ENCODE measurements at regions of chr7 and their contacts with region 1.

Region 1: GRCh38 chr7:30800785-30801252 is 29.6 kb downstream of the MINDY4 start:
- DNase-seq: peak; percentile 82
- H3K4me3 Mint-ChIP-seq: no peak overlapping the region
- H3K27ac Mint-ChIP-seq: no peak overlapping the region
- H3K4me1 Mint-ChIP-seq: peaks cover 18% of the 10 kb centered on the region
- H3K27me3 Mint-ChIP-seq: no peaks in the 10 kb centered on the region

Region 2: DNA sequence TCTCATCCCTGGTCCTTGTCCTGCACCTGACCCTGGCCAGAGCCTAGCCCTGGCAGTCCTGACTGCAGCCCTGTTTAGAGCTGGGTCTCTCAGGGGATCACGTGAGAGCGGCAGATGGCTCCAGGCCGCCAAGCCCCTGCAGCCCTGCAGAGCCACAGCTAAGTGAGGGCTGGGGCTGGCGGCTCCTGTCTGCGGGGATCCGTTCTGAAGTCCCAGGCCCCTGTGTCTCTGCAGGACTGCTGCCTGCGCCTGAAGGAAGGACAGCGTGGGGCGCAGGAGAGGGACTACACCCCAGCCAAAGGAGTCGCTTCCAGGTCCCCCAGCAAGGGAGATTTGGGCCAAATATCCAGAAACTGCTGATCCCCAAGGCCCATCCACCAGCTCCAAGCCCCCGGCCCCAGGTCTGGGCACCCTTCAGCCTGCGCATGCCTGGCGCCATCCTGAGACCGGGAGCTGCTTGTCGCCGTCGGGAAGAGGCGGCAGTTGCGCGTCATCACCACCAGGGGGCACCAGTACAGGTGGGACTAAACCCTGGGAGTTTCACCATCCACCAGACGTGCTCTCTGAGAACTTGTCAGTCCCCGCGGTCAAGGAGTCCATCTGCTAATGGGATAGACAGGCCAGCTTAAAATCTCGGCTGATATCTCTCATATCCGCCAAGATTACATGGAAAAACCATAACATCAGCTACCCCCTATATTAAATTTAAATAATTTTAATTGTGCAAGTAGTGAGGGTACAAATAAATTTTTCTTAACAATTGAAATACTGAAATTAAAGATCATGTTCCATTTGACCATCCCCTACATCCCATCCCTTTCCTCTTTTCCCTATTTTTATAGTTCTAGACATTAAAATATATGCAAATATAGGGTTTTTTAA is 137.9 kb after region 1 on chr7:
- intact Hi-C with region 1: loop called (anchors 2 kb)
- DNase-seq: peak; percentile 92
- H3K4me3 Mint-ChIP-seq: no peak overlapping the region
- H3K27ac Mint-ChIP-seq: no peak overlapping the region
- H3K4me1 Mint-ChIP-seq: no peaks in the 10 kb centered on the region
- H3K27me3 Mint-ChIP-seq: peaks cover 37% of the 10 kb centered on the region

Region 3: GRCh38 chr7:30974605-30975255 is 173.9 kb after region 1 on chr7:
- intact Hi-C with region 1: loop called (anchors 2 kb)
- DNase-seq: peak; percentile 90
- H3K4me3 Mint-ChIP-seq: no peak overlapping the region
- H3K27ac Mint-ChIP-seq: peak overlapping the region; percentile 69
- H3K4me1 Mint-ChIP-seq: peaks cover 7% of the 10 kb centered on the region
- H3K27me3 Mint-ChIP-seq: peaks cover 16% of the 10 kb centered on the region

Region 4: GRCh38 chr7:31488562-31489203 is 687.9 kb after region 1 on chr7:
- intact Hi-C with region 1: loop called (anchors 5 kb)
- DNase-seq: peak; percentile 80
- H3K4me3 Mint-ChIP-seq: no peak overlapping the region
- H3K27ac Mint-ChIP-seq: no peak overlapping the region
- H3K4me1 Mint-ChIP-seq: no peaks in the 10 kb centered on the region
- H3K27me3 Mint-ChIP-seq: no peaks in the 10 kb centered on the region